ENCODE measurements at regions of chr3 and their contacts with region 1.

Region 1: GRCh38 chr3:100796556-100796955 is 87.3 kb downstream of the TFG start:
- DNase-seq: peak; percentile 12
- ATAC-seq: peak; percentile 76
- H3K4me3 ChIP-seq: no peak overlapping the region
- H3K27ac ChIP-seq: no peak overlapping the region
- H3K4me1 ChIP-seq: no peaks in the 10 kb centered on the region
- H3K27me3 ChIP-seq: no peaks in the 10 kb centered on the region
- CTCF ChIP-seq: peak; percentile 30 to 52 (median 35); a peak in 4 of 6 replicates
- EP300 ChIP-seq: no peak
- POLR2A ChIP-seq: no peak
- RAD21 ChIP-seq: peak; percentile 45; the same call in 1 of the 2 replicates

Region 2: GRCh38 chr3:100316641-100317069 is 479.9 kb before region 1 on chr3:
- CTCF ChIA-PET with region 1: interaction called, 9 read pairs
- POLR2A ChIA-PET with region 1: no interaction called
- RAD21 ChIA-PET with region 1: interaction called, 3 read pairs
- SMC1A ChIA-PET with region 1: interaction called, 13 read pairs
- in situ Hi-C with region 1: no loop called
- intact Hi-C with region 1: no loop called
- DNase-seq: no peak
- ATAC-seq: peak; percentile 80
- H3K4me3 ChIP-seq: no peak overlapping the region
- H3K27ac ChIP-seq: no peak overlapping the region
- H3K4me1 ChIP-seq: peaks cover 3% of the 10 kb centered on the region; the same call in 1 of the 2 replicates
- H3K27me3 ChIP-seq: no peaks in the 10 kb centered on the region
- CTCF ChIP-seq: peak; percentile 66 to 67 (median 67)
- EP300 ChIP-seq: no peak
- POLR2A ChIP-seq: no peak
- RAD21 ChIP-seq: peak; percentile 81

Region 3: DNA sequence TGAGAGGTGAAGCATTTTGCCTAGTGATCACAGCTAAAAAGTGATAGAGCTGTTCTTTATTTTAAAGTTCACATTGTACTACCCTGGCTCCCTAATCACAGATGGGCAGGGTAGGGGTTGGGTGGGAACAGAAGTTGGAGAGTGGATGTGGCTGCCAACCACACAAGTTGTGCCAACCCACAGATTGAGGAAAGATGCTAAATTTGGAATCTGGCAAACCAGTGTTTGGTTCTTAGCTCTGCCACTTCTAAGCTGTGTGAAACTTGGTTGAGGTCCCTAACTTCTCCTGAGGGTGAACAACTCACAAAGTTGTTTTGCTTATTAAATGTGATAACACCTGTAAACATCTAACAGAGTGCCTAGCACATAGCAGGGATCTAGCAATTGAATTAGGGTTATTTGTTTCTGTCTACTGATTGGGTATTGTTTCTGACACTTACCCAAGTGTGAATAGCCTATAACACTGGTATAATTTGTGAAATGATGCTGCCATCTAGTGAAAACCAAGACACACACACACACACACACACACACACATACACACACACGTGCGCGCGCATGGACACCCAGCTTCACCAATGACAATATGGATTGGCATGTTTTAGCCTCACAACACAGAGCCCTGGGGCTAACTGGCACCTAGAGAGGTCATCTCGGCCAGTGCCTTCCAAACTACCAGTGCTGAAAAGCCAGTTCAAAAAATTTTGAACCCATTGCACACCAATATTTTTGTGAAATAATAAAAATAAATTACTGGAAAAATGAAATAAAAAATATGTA is 161.9 kb before region 1 on chr3:
- CTCF ChIA-PET with region 1: interaction called, 16 read pairs
- POLR2A ChIA-PET with region 1: no interaction called
- RAD21 ChIA-PET with region 1: interaction called, 7 read pairs
- SMC1A ChIA-PET with region 1: interaction called, 5 read pairs
- in situ Hi-C with region 1: no loop called
- intact Hi-C with region 1: no loop called
- DNase-seq: peak; percentile 31
- ATAC-seq: peak; percentile 92
- H3K4me3 ChIP-seq: no peak overlapping the region
- H3K27ac ChIP-seq: no peak overlapping the region
- H3K4me1 ChIP-seq: no peaks in the 10 kb centered on the region
- H3K27me3 ChIP-seq: no peaks in the 10 kb centered on the region
- CTCF ChIP-seq: peak; percentile 12 to 56 (median 17); a peak in 2 of 6 replicates
- EP300 ChIP-seq: no peak
- POLR2A ChIP-seq: no peak
- RAD21 ChIP-seq: peak; percentile 31; the same call in 1 of the 2 replicates

Region 4: GRCh38 chr3:100650651-100651611 is 145.6 kb before region 1 on chr3:
- CTCF ChIA-PET with region 1: interaction called, 6 read pairs
- POLR2A ChIA-PET with region 1: no interaction called
- RAD21 ChIA-PET with region 1: interaction called, 22 read pairs
- SMC1A ChIA-PET with region 1: interaction called, 6 read pairs
- in situ Hi-C with region 1: no loop called
- intact Hi-C with region 1: no loop called
- DNase-seq: peak; percentile 69
- ATAC-seq: peak; percentile 99
- H3K4me3 ChIP-seq: peak overlapping the region; percentile 30; the same call in 1 of the 2 replicates
- H3K27ac ChIP-seq: peak overlapping the region; percentile 46
- H3K4me1 ChIP-seq: no peaks in the 10 kb centered on the region; the same call in 1 of the 2 replicates
- H3K27me3 ChIP-seq: no peaks in the 10 kb centered on the region
- CTCF ChIP-seq: peak; percentile 37 to 66 (median 38); a peak in 4 of 6 replicates
- EP300 ChIP-seq: peak in 1 of 2 experiments; percentile 22; a peak in 1 of 4 replicates
- POLR2A ChIP-seq: no peak
- RAD21 ChIP-seq: peak; percentile 52

Region 5: GRCh38 chr3:100782906-100783305 is 13.7 kb before region 1 on chr3:
- CTCF ChIA-PET with region 1: interaction called, 12 read pairs
- POLR2A ChIA-PET with region 1: no interaction called
- RAD21 ChIA-PET with region 1: no interaction called
- SMC1A ChIA-PET with region 1: interaction called, 7 read pairs
- in situ Hi-C with region 1: no loop called
- intact Hi-C with region 1: no loop called
- DNase-seq: no peak
- ATAC-seq: no peak
- H3K4me3 ChIP-seq: no peak overlapping the region
- H3K27ac ChIP-seq: no peak overlapping the region
- H3K4me1 ChIP-seq: no peaks in the 10 kb centered on the region
- H3K27me3 ChIP-seq: no peaks in the 10 kb centered on the region
- CTCF ChIP-seq: no peak
- EP300 ChIP-seq: no peak
- POLR2A ChIP-seq: no peak
- RAD21 ChIP-seq: no peak

Region 6: GRCh38 chr3:100810671-100811070 is 14.1 kb after region 1 on chr3:
- CTCF ChIA-PET with region 1: interaction called, 20 read pairs
- POLR2A ChIA-PET with region 1: no interaction called
- RAD21 ChIA-PET with region 1: no interaction called
- SMC1A ChIA-PET with region 1: interaction called, 3 read pairs
- in situ Hi-C with region 1: no loop called
- intact Hi-C with region 1: no loop called
- DNase-seq: no peak
- ATAC-seq: no peak
- H3K4me3 ChIP-seq: no peak overlapping the region
- H3K27ac ChIP-seq: no peak overlapping the region
- H3K4me1 ChIP-seq: no peaks in the 10 kb centered on the region
- H3K27me3 ChIP-seq: peaks cover 0 to 3% of the 10 kb centered on the region in 2 experiments; a peak in 1 of 4 replicates
- CTCF ChIP-seq: no peak
- EP300 ChIP-seq: no peak
- POLR2A ChIP-seq: no peak
- RAD21 ChIP-seq: no peak

Region 7: DNA sequence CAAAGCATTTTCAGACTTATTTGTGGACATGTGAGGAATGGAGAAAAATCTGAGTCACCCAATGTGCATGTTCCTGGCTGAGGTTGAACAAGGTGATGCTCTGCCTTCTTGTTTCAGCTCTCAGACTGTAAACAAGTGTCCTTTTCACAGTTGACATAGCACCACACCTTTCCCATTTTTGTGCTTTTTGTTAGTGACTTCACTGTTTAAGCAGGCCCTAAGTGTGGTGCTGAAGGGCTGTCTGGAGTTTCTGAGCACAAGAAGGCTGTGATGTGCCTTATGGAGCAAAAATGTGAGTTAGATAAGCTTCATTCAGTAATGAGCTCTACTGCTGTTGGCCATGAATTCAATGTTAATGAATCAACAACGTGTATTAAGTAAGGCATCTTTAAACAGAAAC is 176.3 kb after region 1 on chr3:
- CTCF ChIA-PET with region 1: no interaction called
- POLR2A ChIA-PET with region 1: no interaction called
- RAD21 ChIA-PET with region 1: no interaction called
- SMC1A ChIA-PET with region 1: no interaction called
- in situ Hi-C with region 1: no loop called
- intact Hi-C with region 1: no loop called
- DNase-seq: no peak
- ATAC-seq: no peak
- H3K4me3 ChIP-seq: no peak overlapping the region
- H3K27ac ChIP-seq: no peak overlapping the region
- H3K4me1 ChIP-seq: no peaks in the 10 kb centered on the region
- H3K27me3 ChIP-seq: no peaks in the 10 kb centered on the region
- CTCF ChIP-seq: no peak
- EP300 ChIP-seq: no peak
- POLR2A ChIP-seq: no peak
- RAD21 ChIP-seq: no peak